ENCODE measurements at regions of chr15 and their contacts with region 1.

Region 1: DNA sequence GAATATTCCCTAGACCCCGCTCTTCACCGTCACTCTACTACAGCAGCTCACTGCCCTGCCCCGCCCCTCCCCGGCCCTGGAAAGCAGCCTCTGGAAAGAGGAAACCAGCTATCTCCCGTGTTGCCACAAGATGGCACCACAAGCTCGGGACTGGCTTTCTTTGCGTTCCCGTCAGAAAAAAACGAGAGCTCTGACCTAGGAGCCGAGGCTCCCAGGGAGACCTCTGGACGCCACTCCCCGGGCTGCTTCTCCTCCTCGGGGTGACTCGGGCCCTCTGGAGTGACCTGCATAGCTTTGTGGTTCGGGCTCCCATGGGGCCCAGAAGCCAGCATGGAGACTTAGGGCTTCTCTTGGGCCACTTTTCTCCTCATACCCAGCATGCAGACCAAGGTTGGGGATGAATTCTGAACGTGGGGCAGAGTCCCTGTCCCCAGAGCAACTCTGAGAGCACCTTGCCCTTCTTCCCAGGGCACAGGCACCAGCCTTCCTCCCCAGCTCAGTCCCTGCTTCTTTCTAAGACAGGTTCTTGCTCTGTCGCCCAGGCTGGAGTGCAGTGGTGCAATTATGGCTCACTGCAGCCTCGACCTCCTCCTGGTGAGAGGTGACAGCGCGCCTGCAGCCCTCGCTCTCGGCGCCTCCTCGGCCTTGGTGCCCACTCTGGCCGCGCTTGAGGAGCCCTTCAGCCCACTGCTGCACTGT is 19.0 kb downstream of the STOML1 start:
- DNase-seq: no peak
- ATAC-seq: peak; percentile 95
- H3K4me3 ChIP-seq: peak overlapping the region; percentile 17 to 52; a peak in 3 of 4 replicates
- H3K27ac ChIP-seq: no peak overlapping the region; the same call in 1 of the 2 replicates
- H3K4me1 ChIP-seq: peaks cover 0 to 8% of the 10 kb centered on the region in 2 experiments; a peak in 2 of 4 replicates
- H3K27me3 ChIP-seq: no peaks in the 10 kb centered on the region
- CTCF ChIP-seq: peak; percentile 87 to 93 (median 87)
- POLR2A ChIP-seq: no peak
- RAD21 ChIP-seq: peak; percentile 98

Region 2: DNA sequence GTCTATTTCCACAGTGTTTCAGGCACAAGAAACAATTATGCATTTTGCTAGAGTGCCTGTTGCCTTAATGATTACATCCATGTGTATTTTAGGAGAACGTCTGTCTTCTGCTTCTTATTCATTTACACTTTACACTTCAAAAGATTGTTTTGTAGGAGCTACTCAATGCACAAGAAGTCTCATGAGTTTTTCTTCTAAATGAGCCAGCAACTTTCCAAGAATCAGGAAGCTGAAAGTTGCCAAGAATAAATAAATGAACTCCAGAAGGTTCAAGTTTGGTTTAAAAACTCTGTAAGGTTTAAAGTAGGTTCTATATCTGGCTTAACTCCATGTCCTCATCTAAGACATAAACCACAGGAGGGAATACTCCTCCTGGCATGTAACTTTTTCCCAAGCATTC is 1085.8 kb before region 1 on chr15:
- CTCF ChIA-PET with region 1: no interaction called
- POLR2A ChIA-PET with region 1: no interaction called
- RAD21 ChIA-PET with region 1: no interaction called
- intact Hi-C with region 1: no loop called
- DNase-seq: no peak
- ATAC-seq: no peak
- H3K4me3 ChIP-seq: no peak overlapping the region
- H3K27ac ChIP-seq: no peak overlapping the region
- H3K4me1 ChIP-seq: no peaks in the 10 kb centered on the region
- H3K27me3 ChIP-seq: no peaks in the 10 kb centered on the region
- CTCF ChIP-seq: no peak
- POLR2A ChIP-seq: no peak
- RAD21 ChIP-seq: no peak

Region 3: GRCh38 chr15:73950831-73951561 is 22.1 kb before region 1 on chr15:
- CTCF ChIA-PET with region 1: interaction called, 15 read pairs
- POLR2A ChIA-PET with region 1: interaction called, 3 read pairs
- RAD21 ChIA-PET with region 1: no interaction called
- intact Hi-C with region 1: no loop called
- DNase-seq: no peak
- ATAC-seq: peak; percentile 97
- H3K4me3 ChIP-seq: no peak overlapping the region
- H3K27ac ChIP-seq: no peak overlapping the region
- H3K4me1 ChIP-seq: peaks cover 0 to 16% of the 10 kb centered on the region in 2 experiments; a peak in 3 of 4 replicates
- H3K27me3 ChIP-seq: no peaks in the 10 kb centered on the region
- CTCF ChIP-seq: peak; percentile 66 to 93 (median 81)
- POLR2A ChIP-seq: no peak
- RAD21 ChIP-seq: peak; percentile 88

Region 4: DNA sequence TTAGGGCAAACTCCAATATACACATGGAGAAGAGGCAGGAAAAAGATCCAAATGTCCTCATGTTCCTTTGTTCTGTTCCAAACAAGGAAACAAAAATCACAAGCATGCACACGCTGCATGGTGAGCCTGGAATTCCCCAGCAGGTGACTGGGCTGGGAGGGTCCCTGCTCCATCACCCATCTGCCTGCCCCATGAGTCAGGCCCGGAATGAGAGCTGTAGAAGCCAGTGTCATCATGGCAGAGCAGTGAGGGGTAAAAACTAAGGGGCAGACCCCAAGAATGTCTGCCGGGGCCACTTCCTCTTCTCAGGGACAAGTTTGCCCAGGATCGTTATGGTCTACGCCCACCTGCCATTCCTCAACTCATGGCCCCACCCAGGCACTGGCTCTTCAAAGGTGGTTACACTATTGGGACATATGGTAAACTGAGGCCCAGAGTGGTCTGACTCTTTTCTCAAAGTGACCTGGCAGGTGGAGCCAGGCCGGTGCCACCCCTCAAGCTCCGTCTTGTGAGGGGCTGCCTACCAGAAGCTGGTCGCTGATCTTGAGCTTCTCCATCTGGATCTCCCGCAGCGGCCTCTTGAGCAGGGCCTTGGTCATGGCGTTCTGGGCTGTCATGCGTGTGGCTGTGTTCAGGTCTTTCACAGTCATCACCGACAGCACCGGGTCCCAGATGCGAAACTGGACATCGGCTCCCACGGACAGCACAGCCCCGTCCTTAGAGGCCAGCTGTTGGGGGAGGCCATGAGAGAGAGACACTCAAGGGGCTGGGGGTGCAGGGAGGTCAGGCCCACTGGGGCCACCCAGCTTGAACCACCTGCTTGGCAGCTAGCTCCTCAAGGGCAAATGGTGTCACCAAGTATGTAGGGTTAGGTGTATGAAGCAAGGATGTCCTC is 15.2 kb after region 1 on chr15:
- CTCF ChIA-PET with region 1: interaction called, 27 read pairs
- POLR2A ChIA-PET with region 1: interaction called, 6 read pairs
- RAD21 ChIA-PET with region 1: interaction called, 3 to 8 read pairs
- intact Hi-C with region 1: no loop called
- DNase-seq: no peak
- ATAC-seq: no peak
- H3K4me3 ChIP-seq: no peak overlapping the region
- H3K27ac ChIP-seq: no peak overlapping the region
- H3K4me1 ChIP-seq: peaks cover 25 to 60% of the 10 kb centered on the region in 2 experiments
- H3K27me3 ChIP-seq: no peaks in the 10 kb centered on the region
- CTCF ChIP-seq: no peak
- POLR2A ChIP-seq: no peak
- RAD21 ChIP-seq: no peak

Region 5: GRCh38 chr15:74036271-74037170 is 63.4 kb after region 1 on chr15:
- CTCF ChIA-PET with region 1: interaction called, 132 read pairs
- POLR2A ChIA-PET with region 1: interaction called, 6 read pairs
- RAD21 ChIA-PET with region 1: interaction called, 9 to 23 read pairs
- intact Hi-C with region 1: loop called (anchors 1 kb)
- DNase-seq: peak; percentile 22
- ATAC-seq: peak; percentile 91
- H3K4me3 ChIP-seq: no peak overlapping the region
- H3K27ac ChIP-seq: no peak overlapping the region
- H3K4me1 ChIP-seq: peaks cover 0 to 9% of the 10 kb centered on the region in 2 experiments; a peak in 1 of 4 replicates
- H3K27me3 ChIP-seq: no peaks in the 10 kb centered on the region
- CTCF ChIP-seq: peak; percentile 28 to 62 (median 54); a peak in 5 of 6 replicates
- POLR2A ChIP-seq: no peak
- RAD21 ChIP-seq: peak; percentile 56

Region 6: GRCh38 chr15:74053941-74054529 is 80.9 kb after region 1 on chr15:
- CTCF ChIA-PET with region 1: interaction called, 36 read pairs
- POLR2A ChIA-PET with region 1: interaction called, 3 read pairs
- RAD21 ChIA-PET with region 1: interaction called, 3 to 4 read pairs
- intact Hi-C with region 1: no loop called
- DNase-seq: peak; percentile 52
- ATAC-seq: peak; percentile 99
- H3K4me3 ChIP-seq: peak overlapping the region in 1 of 2 experiments; percentile 29; a peak in 1 of 4 replicates
- H3K27ac ChIP-seq: no peak overlapping the region
- H3K4me1 ChIP-seq: peaks cover 4 to 16% of the 10 kb centered on the region in 2 experiments; a peak in 3 of 4 replicates
- H3K27me3 ChIP-seq: no peaks in the 10 kb centered on the region
- CTCF ChIP-seq: peak; percentile 33 to 62 (median 53); a peak in 5 of 6 replicates
- POLR2A ChIP-seq: no peak
- RAD21 ChIP-seq: peak; percentile 68

Region 7: GRCh38 chr15:74307827-74308644 is 334.9 kb after region 1 on chr15:
- CTCF ChIA-PET with region 1: interaction called, 32 read pairs
- POLR2A ChIA-PET with region 1: no interaction called
- RAD21 ChIA-PET with region 1: interaction called, 3 to 10 read pairs
- intact Hi-C with region 1: loop called (anchors 5 kb)
- DNase-seq: peak; percentile 49
- ATAC-seq: peak; percentile 89
- H3K4me3 ChIP-seq: no peak overlapping the region
- H3K27ac ChIP-seq: no peak overlapping the region
- H3K4me1 ChIP-seq: peaks cover 4 to 18% of the 10 kb centered on the region in 2 experiments; a peak in 3 of 4 replicates
- H3K27me3 ChIP-seq: no peaks in the 10 kb centered on the region
- CTCF ChIP-seq: peak; percentile 74 to 88 (median 80); a peak in 5 of 6 replicates
- POLR2A ChIP-seq: no peak
- RAD21 ChIP-seq: peak; percentile 87

Region 8: DNA sequence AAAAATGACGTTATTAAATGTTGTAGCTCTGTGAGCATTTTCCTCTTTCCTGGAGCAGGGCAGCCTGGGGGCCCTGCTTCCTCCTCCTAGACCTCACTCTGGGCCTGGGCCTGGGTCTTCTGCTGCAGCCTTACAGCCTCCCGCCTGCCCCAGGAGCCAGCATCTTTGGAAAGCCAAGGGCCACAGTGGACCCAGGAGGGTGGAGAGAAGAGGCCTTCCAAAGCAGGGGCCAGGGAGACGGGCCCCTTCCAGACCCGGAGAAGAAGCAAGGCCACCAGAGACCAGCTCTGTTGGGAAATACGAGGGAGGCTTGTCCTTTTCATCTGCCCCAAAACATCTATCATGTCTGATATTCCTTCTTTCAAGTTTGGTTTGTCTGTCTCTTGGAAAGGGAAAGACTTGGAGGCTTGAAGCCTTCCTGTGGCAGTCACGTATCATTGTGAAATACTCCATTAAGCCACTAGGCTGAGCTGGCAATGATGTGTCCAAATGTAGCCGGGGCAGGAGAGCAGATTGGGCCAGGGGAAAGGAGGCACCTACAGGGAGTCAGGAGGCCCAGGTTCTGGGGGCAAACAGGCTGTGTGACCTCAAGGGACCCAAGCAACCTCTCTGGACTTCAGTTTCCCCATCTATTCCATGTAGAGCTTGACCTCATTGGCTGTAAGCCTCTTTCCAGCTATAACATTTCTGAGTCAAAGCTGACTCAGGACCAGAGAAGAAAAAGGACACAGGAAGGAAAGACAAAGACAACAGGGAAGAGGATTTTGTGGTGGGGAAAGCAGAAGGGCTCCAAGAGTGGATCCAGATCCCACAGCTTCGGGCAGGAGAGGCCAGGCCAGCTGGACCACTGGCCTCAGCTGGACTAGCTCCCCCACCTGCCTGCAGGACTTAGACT is 363.2 kb after region 1 on chr15:
- CTCF ChIA-PET with region 1: no interaction called
- POLR2A ChIA-PET with region 1: no interaction called
- RAD21 ChIA-PET with region 1: no interaction called
- intact Hi-C with region 1: no loop called
- DNase-seq: no peak
- ATAC-seq: no peak; the same call in 1 of the 2 replicates
- H3K4me3 ChIP-seq: no peak overlapping the region
- H3K27ac ChIP-seq: no peak overlapping the region
- H3K4me1 ChIP-seq: no peaks in the 10 kb centered on the region
- H3K27me3 ChIP-seq: no peaks in the 10 kb centered on the region
- CTCF ChIP-seq: no peak
- POLR2A ChIP-seq: no peak
- RAD21 ChIP-seq: no peak

Measured in HCT116 (cell line).